IMR-90 (cell line): ENCODE measurements at regions of chr2 and their contacts with region 1.

Region 1: DNA sequence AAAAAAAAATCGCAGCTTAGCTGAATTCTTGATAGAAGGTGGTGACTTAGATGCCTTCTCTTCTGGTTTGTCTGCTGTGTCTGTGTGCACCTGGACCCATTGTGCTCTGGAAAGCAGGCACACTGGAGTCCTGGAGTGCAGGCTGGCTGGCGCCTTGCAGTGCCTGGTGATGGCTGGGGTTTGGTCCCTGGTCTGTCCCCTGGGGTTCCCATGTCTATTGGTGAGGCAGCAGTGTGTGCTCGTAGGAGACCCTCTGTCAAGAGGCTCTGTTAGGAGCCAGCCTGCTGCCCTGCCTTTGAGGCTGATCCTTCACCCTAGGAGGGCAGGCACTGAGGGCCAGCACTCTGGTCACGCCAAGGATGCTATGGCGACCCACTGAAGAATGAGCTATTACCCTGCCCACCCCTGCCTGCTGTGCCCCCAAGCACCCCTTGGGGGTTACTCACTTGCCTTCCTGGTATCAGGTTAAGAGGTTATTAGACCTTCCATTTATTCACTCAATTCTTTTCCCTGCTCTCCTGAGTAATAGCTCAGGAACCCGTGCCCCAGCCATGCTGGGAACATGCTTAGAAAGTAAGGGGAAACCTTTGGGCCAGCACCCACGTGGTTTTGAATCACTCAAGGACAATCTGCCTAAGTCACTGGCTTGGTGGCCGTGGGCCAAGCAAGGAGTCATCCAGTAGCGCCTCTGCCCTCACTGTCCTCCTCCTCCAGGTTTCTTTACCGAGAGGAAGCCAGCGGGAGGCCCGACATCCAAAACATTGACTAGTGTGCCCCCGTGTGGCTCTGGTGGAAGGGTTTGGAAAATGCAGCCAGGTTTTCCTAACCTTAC is 284.5 kb downstream of the PRKCE start:
- DNase-seq: peak; percentile 99
- ATAC-seq: peak; percentile 69
- H3K4me3 ChIP-seq: no peak overlapping the region
- H3K27ac ChIP-seq: peak overlapping the region; percentile 13
- H3K4me1 ChIP-seq: peaks cover 16% of the 10 kb centered on the region
- H3K27me3 ChIP-seq: no peaks in the 10 kb centered on the region
- CTCF ChIP-seq: peak; percentile 95
- POLR2A ChIP-seq: no peak
- RAD21 ChIP-seq: peak; percentile 95

Region 2: DNA sequence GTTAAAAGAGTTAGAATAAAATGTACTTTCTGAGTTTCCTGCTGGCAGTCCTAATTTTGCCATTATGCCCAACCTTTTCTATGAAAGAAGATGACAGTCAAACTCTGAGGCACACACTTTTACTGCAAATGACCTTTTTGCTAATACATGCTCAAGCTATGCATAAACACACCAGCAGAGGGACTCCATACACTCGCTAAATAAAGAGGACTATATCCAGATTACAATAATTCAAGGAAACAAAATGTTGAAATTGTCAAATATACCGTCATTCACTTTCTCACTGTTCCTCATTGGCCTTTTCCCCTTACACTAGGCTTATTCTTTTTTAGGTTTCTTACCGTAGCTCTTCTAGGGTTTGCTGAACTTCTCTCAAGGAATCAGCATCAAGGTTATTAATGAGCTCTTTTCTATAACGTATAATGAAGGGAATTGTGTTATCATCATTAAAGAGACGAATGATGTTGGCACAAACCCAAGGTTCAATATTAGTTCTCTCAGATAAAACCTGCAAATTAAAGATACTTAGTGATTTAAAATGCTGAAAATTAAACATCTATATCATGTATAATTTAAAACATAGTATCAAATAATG is 350.6 kb before region 1 on chr2:
- CTCF ChIA-PET with region 1: no interaction called
- POLR2A ChIA-PET with region 1: no interaction called
- dilution Hi-C with region 1: no loop called
- in situ Hi-C with region 1: no loop called
- intact Hi-C with region 1: loop called (anchors 1 kb)
- DNase-seq: peak; percentile 63
- ATAC-seq: peak; percentile 88
- H3K4me3 ChIP-seq: no peak overlapping the region
- H3K27ac ChIP-seq: no peak overlapping the region
- H3K4me1 ChIP-seq: no peaks in the 10 kb centered on the region
- H3K27me3 ChIP-seq: no peaks in the 10 kb centered on the region
- CTCF ChIP-seq: peak; percentile 69
- POLR2A ChIP-seq: no peak
- RAD21 ChIP-seq: peak; percentile 57

Region 3: DNA sequence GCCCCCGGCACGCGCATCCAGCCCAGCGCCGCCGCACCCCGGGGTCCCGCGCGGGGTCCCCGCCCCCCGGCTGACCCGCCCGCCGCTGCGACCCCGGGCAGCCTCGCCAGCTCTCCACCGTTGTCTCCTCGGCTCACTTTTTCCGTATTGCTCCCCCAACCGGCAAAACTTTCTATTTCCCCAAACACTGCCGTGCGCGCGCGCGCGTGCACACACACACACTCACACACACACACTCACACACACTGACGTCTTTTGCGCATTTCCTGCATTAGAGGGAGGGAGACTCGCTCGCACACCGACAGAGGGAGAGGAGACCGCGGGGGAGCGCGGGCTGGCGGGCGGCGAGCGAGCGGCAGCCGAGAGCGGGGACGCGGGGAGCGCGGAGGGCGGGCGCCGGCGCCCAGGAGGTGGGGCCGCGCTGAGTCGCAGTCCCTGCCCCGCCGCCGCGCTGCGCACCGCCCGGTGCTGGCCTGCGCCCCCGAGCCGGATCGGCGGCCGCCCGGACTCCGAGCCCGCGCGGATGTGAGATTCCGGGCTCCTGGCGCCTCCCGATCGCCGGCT is 285.1 kb before region 1 on chr2:
- CTCF ChIA-PET with region 1: interaction called, 3 read pairs
- POLR2A ChIA-PET with region 1: no interaction called
- dilution Hi-C with region 1: loop called (anchors 25 kb)
- in situ Hi-C with region 1: loop called (anchors 5 kb)
- intact Hi-C with region 1: loop called (anchors 1 kb)
- DNase-seq: peak; percentile 98
- ATAC-seq: peak; percentile 84
- H3K4me3 ChIP-seq: peak overlapping the region; percentile 49
- H3K27ac ChIP-seq: peak overlapping the region; percentile 83
- H3K4me1 ChIP-seq: peaks cover 4% of the 10 kb centered on the region
- H3K27me3 ChIP-seq: no peaks in the 10 kb centered on the region
- CTCF ChIP-seq: peak; percentile 58
- POLR2A ChIP-seq: peak; percentile 86
- RAD21 ChIP-seq: peak; percentile 47

Region 4: DNA sequence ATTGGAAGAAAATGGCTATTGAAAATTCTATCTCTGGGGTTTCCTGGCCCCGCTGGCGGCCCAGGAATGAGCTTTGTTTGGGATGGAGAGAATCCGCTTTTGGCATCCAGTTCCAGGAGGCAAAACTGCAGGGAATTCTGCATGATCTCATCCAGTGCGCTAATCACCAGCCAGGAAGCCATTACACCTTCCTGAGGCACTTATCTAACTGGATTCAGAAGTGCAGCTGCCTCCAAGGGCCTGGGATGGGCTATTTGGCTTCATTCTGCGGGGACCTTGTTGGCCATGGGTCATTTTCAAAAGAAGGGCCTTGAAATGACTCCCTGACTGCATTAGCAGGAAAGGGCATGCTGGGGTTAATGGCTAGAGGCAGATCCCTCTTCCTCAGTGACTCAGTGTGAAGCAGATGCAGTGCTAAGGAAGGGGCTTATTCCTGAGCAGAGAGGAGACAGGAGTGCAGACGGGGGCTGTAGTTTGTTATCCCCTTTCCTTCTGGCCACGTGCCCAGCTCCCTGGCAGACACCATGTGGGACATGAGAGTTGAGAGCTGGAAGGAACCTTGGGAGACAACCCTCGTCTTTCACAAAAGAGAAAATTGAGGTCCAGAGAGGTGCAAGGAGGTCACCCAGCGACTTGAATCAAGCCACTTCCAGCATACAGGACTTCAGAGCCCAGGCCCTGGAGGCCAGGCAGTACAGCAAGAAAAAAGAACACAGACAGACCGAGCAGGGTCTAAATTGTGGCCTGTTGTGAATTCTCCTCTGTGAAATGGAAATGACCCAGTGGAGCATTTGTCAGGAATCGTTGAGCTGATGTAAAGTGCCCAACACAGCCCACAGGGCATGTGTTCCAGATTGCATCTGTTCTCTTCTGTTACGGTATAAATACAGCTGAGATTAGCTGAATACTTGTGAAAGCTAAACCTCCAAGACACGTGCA is 122.7 kb before region 1 on chr2:
- CTCF ChIA-PET with region 1: no interaction called
- POLR2A ChIA-PET with region 1: no interaction called
- dilution Hi-C with region 1: no loop called
- in situ Hi-C with region 1: no loop called
- intact Hi-C with region 1: no loop called
- DNase-seq: peak; percentile 64
- ATAC-seq: no peak
- H3K4me3 ChIP-seq: no peak overlapping the region
- H3K27ac ChIP-seq: no peak overlapping the region
- H3K4me1 ChIP-seq: peaks cover 10% of the 10 kb centered on the region
- H3K27me3 ChIP-seq: no peaks in the 10 kb centered on the region
- CTCF ChIP-seq: no peak
- POLR2A ChIP-seq: no peak
- RAD21 ChIP-seq: no peak

Region 5: DNA sequence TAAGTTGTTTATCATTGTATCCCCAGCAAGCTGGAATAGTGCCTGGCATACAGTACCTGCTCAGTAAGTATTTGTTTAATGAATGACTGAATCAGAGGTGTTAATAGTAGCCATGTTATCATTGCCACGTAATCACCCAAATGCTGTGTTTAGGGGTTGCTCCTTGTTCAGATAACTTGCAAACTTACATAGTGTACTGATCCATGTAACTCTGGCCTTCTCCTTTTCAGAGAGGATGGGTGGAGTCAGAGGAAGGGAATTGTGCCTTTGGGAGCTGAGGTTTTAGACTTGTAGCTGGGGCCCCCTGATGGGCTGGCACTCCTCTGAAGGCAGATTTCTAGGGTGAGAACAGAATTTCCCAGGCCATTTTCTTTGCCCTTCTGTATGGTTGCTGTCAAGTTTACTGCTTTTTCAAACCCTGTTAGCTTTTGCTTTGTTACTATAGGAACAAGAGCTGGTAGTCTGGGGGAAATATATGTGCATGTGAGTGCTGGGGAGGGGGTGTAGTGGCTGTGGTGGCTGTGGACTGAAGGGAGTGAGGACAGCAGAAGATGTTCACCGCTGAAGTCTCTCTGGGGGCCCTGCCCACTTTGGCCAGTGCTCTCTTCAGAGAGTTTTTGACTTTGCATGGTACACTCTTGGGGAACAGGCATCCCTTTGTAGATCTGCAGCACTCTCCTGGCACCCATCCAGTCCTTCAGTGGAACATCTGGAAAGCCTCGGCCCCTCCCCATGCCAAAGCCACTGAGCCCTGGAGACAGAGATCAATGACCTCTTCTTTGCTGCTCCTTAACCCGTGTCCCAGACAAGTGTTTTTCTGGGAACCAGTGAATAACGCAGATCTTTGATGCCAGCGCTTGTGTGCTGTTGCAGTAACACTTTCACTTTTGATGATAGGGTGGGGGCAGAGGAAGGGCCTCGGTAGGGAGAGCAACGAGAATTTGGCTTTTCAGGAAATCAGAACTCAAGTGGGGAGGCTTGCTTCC is 75.6 kb before region 1 on chr2:
- CTCF ChIA-PET with region 1: no interaction called
- POLR2A ChIA-PET with region 1: no interaction called
- dilution Hi-C with region 1: no loop called
- in situ Hi-C with region 1: no loop called
- intact Hi-C with region 1: loop called (anchors 5 kb)
- DNase-seq: peak; percentile 38
- ATAC-seq: peak; percentile 79
- H3K4me3 ChIP-seq: peak overlapping the region; percentile 20
- H3K27ac ChIP-seq: peak overlapping the region; percentile 37; the same call in 1 of the 2 replicates
- H3K4me1 ChIP-seq: peaks cover 3% of the 10 kb centered on the region; the same call in 1 of the 2 replicates
- H3K27me3 ChIP-seq: no peaks in the 10 kb centered on the region
- CTCF ChIP-seq: no peak
- POLR2A ChIP-seq: no peak
- RAD21 ChIP-seq: no peak